CD4-positive, alpha-beta T cell (primary cell): ENCODE measurements at regions of chr2 and their contacts with region 1.

Region 1: GRCh38 chr2:10122386-10123280 is at the start of gene RRM2:
- DNase-seq: peak; percentile 75 to 93 (median 84)
- ATAC-seq: peak; percentile 77
- H3K4me3 ChIP-seq: peak within 1 kb of the TSS; percentile 61
- H3K4me3 Mint-ChIP-seq: peak within 1 kb of the TSS; percentile 94
- H3K27ac ChIP-seq: no peak within 1 kb of the TSS
- H3K27ac Mint-ChIP-seq: peak within 1 kb of the TSS; percentile 78
- H3K4me1 ChIP-seq: peaks cover 60% of the 10 kb centered on the region
- H3K4me1 Mint-ChIP-seq: peaks cover 45% of the 10 kb centered on the region
- H3K27me3 ChIP-seq: peaks cover 11 to 13% of the 10 kb centered on the region in 2 experiments
- H3K27me3 Mint-ChIP-seq: peaks cover 19% of the 10 kb centered on the region
- CTCF ChIP-seq: no peak
- total RNA-seq, gene RRM2: 1.4 to 1.6 TPM

Region 2: DNA sequence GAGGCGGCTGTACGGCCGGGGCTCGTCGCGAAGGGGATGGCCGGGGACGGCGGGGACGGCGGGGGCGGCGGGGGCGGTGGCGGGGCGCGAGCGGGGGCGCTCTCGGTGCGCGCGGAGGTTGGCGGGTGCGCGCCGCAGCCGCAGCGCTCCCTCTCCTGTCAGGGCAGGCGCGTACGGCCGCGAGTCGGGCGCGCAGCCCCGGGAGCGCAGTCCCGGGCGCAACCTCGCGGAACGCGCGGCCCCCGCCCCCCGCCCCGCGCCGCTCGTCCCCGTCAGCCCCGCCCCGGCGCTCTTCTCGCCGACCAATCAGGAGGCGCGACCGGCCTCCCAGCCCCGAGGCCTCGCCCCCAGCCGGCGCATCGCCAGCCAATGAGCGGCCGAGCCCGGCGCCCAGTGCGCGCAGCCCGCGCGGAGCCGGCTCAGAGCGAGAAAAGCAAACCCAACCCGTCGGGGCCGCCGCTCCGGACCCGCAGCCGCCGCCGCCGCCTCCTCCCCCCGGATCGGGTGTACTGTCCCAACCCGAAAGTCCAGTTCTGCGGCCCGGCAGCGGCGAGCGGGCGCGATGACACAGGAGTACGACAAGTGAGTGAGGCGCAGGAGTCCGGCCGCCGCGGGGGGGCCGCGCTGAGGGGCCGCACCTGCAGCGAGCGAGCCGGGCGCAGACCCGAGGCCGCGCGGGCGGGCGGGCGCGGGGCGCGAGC is 171.2 kb before region 1 on chr2 and contains the start of gene GRHL1:
- CTCF ChIA-PET with region 1: no interaction called
- POLR2A ChIA-PET with region 1: no interaction called
- intact Hi-C with region 1: loop called in 1 of 2 experiments (anchors 5 kb)
- DNase-seq: peak; percentile 78 to 98 (median 88)
- ATAC-seq: peak; percentile 95
- H3K4me3 ChIP-seq: peak within 1 kb of the TSS; percentile 52
- H3K4me3 Mint-ChIP-seq: peak within 1 kb of the TSS; percentile 94
- H3K27ac ChIP-seq: no peak within 1 kb of the TSS
- H3K27ac Mint-ChIP-seq: peak within 1 kb of the TSS; percentile 39
- H3K4me1 ChIP-seq: peaks cover 10% of the 10 kb centered on the region
- H3K4me1 Mint-ChIP-seq: peaks cover 4% of the 10 kb centered on the region
- H3K27me3 ChIP-seq: peaks cover 11 to 21% of the 10 kb centered on the region in 2 experiments
- H3K27me3 Mint-ChIP-seq: peaks cover 56% of the 10 kb centered on the region
- CTCF ChIP-seq: no peak
- total RNA-seq, gene GRHL1: 0.28 to 0.38 TPM

Region 3: GRCh38 chr2:10079234-10079869 is 43.3 kb before region 1 on chr2:
- CTCF ChIA-PET with region 1: interaction called, 3 read pairs
- POLR2A ChIA-PET with region 1: no interaction called
- intact Hi-C with region 1: loop called in 1 of 2 experiments (anchors 5 kb)
- DNase-seq: peak in 3 of 14 experiments; percentile 14 to 43 (median 40)
- ATAC-seq: peak; percentile 49
- H3K4me3 ChIP-seq: no peak overlapping the region
- H3K4me3 Mint-ChIP-seq: peak overlapping the region; percentile 73
- H3K27ac ChIP-seq: no peak overlapping the region
- H3K27ac Mint-ChIP-seq: no peak overlapping the region
- H3K4me1 ChIP-seq: peaks cover 27% of the 10 kb centered on the region
- H3K4me1 Mint-ChIP-seq: peaks cover 13% of the 10 kb centered on the region
- H3K27me3 ChIP-seq: peaks cover 60 to 77% of the 10 kb centered on the region in 2 experiments
- H3K27me3 Mint-ChIP-seq: peaks cover 76% of the 10 kb centered on the region
- CTCF ChIP-seq: no peak

Region 4: DNA sequence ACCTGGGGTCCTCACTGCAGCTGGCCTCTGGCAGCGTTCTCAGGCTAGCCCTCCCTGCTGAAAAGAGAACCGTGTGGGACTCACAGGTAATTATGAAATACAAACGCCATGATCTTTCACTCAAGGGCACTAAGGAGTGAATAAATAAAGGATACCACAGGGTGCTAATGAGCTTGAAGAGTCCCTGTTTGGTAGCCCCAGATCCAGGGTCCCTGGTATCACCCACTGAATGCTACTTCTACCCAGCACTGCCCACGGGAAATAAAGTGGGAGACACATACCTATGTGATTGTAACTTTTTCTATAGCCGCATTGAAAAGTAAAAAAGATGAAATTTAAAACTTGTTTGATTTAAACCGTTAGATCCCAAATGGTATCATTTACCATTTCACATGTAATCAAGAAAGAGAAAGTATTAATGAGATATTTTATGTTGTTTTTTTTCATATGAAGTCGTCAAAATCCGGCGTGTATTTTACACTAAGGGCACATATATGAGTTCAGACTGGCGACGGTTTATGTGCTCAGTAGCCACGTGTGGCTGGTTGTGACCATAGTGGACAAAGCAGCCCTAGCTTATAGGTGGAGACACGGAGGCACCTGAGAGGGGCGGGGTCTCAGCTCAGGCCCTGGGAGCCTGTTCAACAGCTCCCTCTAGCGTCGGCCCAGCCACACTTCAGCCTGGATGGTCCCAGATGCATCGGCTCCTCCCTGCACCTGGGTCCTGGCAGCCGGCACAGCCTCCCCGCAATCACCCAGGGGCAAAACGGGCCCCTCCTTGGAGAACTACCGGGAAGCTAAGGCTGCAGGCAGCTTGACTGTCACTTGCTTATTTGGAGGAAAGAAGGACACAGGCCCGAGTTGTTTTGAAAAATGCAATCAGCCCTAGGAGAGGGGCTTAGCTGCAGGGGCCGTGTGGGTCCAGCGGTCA is 286.3 kb after region 1 on chr2:
- CTCF ChIA-PET with region 1: interaction called, 45 read pairs
- POLR2A ChIA-PET with region 1: interaction called, 22 read pairs
- intact Hi-C with region 1: loop called (anchors 1 kb)
- DNase-seq: peak; percentile 70 to 92 (median 78)
- ATAC-seq: peak; percentile 90
- H3K4me3 ChIP-seq: no peak overlapping the region
- H3K4me3 Mint-ChIP-seq: peak overlapping the region; percentile 83
- H3K27ac ChIP-seq: peak overlapping the region in 1 of 2 donors; percentile 55
- H3K27ac Mint-ChIP-seq: peak overlapping the region; percentile 87
- H3K4me1 ChIP-seq: peaks cover 51% of the 10 kb centered on the region
- H3K4me1 Mint-ChIP-seq: peaks cover 38% of the 10 kb centered on the region
- H3K27me3 ChIP-seq: no peaks in the 10 kb centered on the region
- H3K27me3 Mint-ChIP-seq: no peaks in the 10 kb centered on the region
- CTCF ChIP-seq: peak; percentile 94

Region 5: DNA sequence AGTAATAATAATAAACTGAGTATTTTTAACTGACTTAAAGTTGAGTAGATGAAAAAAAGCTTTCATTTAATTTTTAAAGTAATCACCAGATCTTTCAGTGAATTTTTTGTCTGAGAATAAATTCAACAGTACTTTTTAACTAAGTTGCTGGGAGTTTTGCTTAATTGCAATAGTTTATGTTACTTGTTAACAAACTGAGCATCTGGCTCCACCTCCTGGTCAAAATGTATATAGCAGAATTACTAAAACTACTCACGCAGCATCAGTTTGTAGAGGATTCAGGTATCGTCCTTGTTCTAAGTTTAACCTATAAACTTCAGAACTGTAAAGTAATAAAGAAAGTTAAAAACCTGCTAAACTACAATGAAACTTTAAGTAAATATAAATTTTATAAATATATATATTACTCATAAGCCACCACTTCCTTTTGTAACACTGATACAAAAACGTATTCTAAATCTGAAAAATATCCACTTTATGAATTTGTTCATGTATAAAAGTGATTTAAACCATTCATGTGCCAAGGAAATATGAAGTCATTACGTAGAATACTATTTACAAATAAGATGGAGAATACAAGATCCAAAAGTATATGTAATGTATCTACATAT is 545.9 kb after region 1 on chr2:
- CTCF ChIA-PET with region 1: no interaction called
- POLR2A ChIA-PET with region 1: no interaction called
- intact Hi-C with region 1: loop called (anchors 5 kb)
- DNase-seq: peak in 5 of 14 experiments; percentile 14 to 82 (median 72)
- ATAC-seq: peak; percentile 71
- H3K4me3 ChIP-seq: no peak overlapping the region
- H3K4me3 Mint-ChIP-seq: no peak overlapping the region
- H3K27ac ChIP-seq: no peak overlapping the region
- H3K27ac Mint-ChIP-seq: no peak overlapping the region
- H3K4me1 ChIP-seq: no peaks in the 10 kb centered on the region
- H3K4me1 Mint-ChIP-seq: peaks cover 6% of the 10 kb centered on the region
- H3K27me3 ChIP-seq: no peaks in the 10 kb centered on the region
- H3K27me3 Mint-ChIP-seq: no peaks in the 10 kb centered on the region
- CTCF ChIP-seq: peak; percentile 89